ENCODE measurements at regions of chr11 and their contacts with region 1.

Region 1: GRCh38 chr11:86608251-86608799 is 64.1 kb downstream of the ME3 start:
- DNase-seq: peak; percentile 56 to 81
- ATAC-seq: peak; percentile 80 to 96 (median 92)
- H3K4me3 ChIP-seq: peak overlapping the region; percentile 37
- H3K27ac ChIP-seq: peak overlapping the region; percentile 4
- H3K4me1 ChIP-seq: peaks cover 13% of the 10 kb centered on the region
- H3K27me3 ChIP-seq: no peaks in the 10 kb centered on the region
- CTCF ChIP-seq: peak; percentile 95

Region 2: DNA sequence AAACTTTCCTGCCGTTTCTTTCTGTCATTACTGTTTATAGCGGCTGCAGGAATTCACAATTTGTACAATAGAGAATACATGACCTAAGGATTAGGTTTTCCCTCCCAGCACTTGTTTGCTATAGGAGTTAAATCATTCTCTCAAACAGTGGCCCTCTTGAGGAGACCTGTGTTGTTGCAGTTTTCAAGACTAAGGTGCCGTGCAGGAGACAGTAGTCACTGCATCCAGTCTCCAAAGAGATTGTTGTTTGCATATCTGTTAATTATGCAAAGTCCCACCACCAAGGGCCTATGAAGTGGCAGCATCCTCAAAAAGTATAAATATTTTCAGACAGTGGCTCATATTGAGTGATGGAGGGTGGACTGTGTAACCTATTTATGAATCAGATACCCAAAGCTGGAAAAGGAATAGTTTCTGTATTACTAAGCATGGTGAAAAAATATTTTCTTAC is 194.3 kb after region 1 on chr11:
- intact Hi-C with region 1: loop called in 1 of 2 experiments (anchors 5 kb)
- DNase-seq: no peak
- ATAC-seq: peak in 1 of 4 donors; percentile 48
- H3K4me3 ChIP-seq: peak overlapping the region; percentile 78
- H3K27ac ChIP-seq: no peak overlapping the region
- H3K4me1 ChIP-seq: peaks cover 15% of the 10 kb centered on the region
- H3K27me3 ChIP-seq: no peaks in the 10 kb centered on the region
- CTCF ChIP-seq: peak; percentile 60

Region 3: DNA sequence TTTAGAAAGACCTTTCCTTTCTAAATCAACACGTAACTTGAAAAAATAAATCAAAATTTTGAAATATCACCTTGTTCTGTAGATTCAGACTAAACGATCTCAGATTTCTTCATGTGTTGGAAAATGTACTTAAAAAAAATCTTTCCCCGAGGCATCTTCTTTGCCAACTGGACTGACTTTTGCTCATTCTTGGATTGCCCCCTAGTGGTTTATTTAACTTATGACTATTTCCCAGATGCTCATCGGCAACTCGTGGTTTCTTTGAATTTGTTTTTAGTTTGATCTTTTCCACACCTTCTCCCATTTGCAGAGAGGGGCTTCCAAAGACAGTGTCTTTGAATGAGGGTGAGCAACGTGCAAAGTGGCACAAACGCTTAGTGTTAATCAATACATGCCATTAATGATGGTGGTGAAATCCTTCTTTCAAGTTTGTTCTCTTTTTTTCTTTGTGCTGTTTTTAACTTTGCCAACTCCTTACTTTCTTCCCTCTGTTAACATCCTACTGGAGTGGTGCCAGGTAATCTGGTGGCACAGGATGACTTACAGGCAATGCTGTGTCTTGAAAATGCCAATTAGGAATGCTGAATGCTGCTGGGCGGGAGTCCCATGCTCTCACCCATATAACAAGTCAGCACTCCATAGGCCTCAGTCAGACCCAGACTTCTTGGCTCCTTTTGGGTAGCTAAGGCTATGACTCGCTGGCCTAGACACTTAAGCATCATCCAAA is 210.3 kb after region 1 on chr11:
- intact Hi-C with region 1: loop called (anchors 1 to 5 kb)
- DNase-seq: no peak
- ATAC-seq: peak in 3 of 4 donors; percentile 43 to 72 (median 46)
- H3K4me3 ChIP-seq: peak overlapping the region; percentile 25
- H3K27ac ChIP-seq: no peak overlapping the region
- H3K4me1 ChIP-seq: peaks cover 33% of the 10 kb centered on the region
- H3K27me3 ChIP-seq: no peaks in the 10 kb centered on the region
- CTCF ChIP-seq: peak; percentile 81